Posterior vena cava (tissue), 2 donors: ENCODE measurements at regions of chr10 and their contacts with region 1.

Region 1: DNA sequence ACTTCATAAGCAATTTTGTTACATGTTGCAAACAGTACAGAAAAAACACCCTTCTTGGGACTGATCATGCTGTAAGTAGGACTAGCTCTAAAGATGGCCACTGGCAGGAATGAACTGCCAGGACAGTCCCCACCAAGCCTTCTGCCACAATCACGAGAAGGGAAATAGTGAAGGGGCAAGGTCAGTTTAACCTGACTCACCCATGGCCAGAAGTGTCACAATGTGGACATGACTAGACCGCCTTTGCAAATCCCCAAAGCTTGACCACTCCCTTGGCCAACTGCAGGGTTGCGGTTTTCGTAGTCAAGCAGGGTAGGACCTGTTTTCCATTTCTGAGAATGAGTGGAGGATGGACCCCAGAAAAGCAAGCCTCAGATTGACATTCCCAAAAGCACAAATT is 19.4 kb upstream of the FRAT2 start:
- DNase-seq: no peak

Region 2: DNA sequence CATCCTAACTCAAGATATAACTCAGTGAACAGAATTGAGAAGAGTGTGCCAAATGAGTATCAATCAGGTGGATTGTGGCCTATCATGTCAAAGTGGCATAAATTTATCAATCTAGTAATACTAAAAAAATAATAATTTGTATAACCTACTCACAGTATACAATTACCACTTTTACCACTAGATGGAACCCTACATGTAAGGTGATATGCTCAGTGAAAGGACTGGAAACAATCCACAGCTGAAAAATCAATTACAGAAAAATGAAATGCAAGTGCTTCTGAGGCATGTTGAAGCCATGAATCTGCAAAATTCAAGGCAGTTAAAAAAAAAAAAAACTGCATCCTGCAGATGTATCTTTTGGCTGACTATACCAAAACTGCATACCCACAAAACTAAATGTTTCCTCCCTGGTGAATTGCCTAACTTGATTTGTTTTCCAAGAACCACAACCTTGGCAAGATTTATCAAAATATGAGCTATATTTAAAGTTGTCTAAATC is 75.4 kb before region 1 on chr10:
- intact Hi-C with region 1: no loop called
- DNase-seq: no peak

Region 3: GRCh38 chr10:97334370-97335175 is 19.4 kb before region 1 on chr10 and contains the start of gene FRAT2:
- intact Hi-C with region 1: loop called in 1 of 2 experiments (anchors 1 kb)
- DNase-seq: peak; percentile 97
- total RNA-seq, gene FRAT2: 4.3 to 6.8 TPM